ENCODE measurements at regions of chr1 and their contacts with region 1.

Region 1: GRCh38 chr1:167789501-167789900 is 67.7 kb downstream of the MPZL1 start:
- DNase-seq: peak; percentile 88
- H3K4me3 ChIP-seq: no peak overlapping the region
- H3K27ac ChIP-seq: peak overlapping the region; percentile 78
- H3K4me1 ChIP-seq: peaks cover 42% of the 10 kb centered on the region
- H3K27me3 ChIP-seq: no peaks in the 10 kb centered on the region
- CTCF ChIP-seq: no peak

Region 2: DNA sequence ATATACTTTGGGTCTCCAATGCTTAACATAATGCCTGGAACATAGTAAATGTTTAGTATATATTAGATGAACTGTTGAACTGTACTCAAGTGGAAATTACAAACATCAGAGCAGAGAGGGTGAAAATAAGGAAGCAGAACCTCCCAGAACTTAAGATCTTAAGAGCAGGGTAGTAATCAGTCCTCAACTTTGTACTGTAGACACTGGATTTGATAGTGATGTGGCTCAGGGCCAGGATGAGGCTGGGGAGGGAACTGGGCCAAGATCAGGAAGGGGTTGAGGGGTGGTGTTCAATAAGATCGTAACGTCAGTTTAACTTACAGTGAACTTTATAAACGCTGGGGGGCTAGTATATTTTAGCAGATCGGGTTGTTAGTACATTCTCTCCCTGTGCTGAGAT is 52.3 kb before region 1 on chr1:
- CTCF ChIA-PET with region 1: no interaction called
- dilution Hi-C with region 1: loop called (anchors 10 kb)
- in situ Hi-C with region 1: no loop called
- intact Hi-C with region 1: no loop called
- DNase-seq: no peak
- H3K4me3 ChIP-seq: no peak overlapping the region
- H3K27ac ChIP-seq: no peak overlapping the region
- H3K4me1 ChIP-seq: no peaks in the 10 kb centered on the region
- H3K27me3 ChIP-seq: no peaks in the 10 kb centered on the region
- CTCF ChIP-seq: no peak

Region 3: GRCh38 chr1:168225476-168226190 is 436.1 kb after region 1 on chr1 and contains the start of gene SFT2D2:
- CTCF ChIA-PET with region 1: no interaction called
- dilution Hi-C with region 1: no loop called
- in situ Hi-C with region 1: no loop called
- intact Hi-C with region 1: no loop called
- DNase-seq: peak; percentile 82
- H3K4me3 ChIP-seq: peak within 1 kb of the TSS; percentile 75 to 88 (median 82)
- H3K27ac ChIP-seq: peak within 1 kb of the TSS; percentile 78
- H3K4me1 ChIP-seq: peaks cover 30% of the 10 kb centered on the region
- H3K27me3 ChIP-seq: no peaks in the 10 kb centered on the region
- CTCF ChIP-seq: no peak
- total RNA-seq, gene SFT2D2: 47.3 to 56.6 TPM